ENCODE measurements at regions of chr9 and their contacts with region 1.

Region 1: DNA sequence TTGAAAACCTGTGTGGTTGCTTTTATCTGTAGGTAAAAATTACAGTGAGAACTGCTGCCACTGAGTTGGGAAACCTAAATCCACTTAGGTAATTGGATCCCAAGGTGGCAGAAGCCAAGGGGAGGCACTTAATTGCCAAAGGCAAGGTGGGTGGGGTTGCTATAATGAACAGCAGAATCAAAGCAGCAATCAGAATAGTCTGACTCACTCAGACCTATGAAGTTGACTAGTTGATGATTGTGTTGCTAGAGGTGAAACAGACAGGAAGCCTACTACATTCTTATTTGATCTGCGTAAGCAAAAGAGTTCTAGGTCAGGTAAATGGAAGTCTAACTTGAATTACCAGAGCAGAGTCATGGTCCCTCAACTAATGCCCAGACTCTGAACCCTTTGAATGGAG is 17.3 kb upstream of the BICD2 start:
- DNase-seq: no peak
- CTCF ChIP-seq: no peak

Region 2: GRCh38 chr9:92716557-92716956 is 65.4 kb before region 1 on chr9:
- in situ Hi-C with region 1: loop called (anchors 10 kb)
- DNase-seq: peak; percentile 87
- CTCF ChIP-seq: peak; percentile 94

Measured in GM13976 (cell line).